IMR-90 (cell line): ENCODE measurements at regions of chr1 and their contacts with region 1.

Region 1: DNA sequence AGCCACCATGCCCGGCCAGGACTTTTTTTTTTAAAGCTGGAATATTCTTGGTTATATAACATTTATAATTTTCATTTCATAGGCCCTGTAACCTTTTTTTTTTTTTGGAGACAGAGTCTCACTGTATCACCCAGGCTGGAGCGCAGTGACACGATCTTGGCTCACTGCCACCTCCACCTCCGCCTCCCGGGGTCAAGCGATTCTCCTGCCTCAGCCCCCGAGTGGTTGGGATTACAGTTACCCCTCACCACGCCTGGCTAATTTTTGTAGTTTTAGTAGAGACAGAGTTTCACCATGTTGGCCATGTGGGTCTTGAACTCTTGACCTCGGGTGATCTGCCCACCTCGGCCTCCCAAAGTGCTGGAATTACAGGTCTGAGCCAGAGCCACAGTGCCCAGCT is 12.6 kb downstream of the ZYG11B start:
- DNase-seq: no peak
- ATAC-seq: no peak
- H3K4me3 ChIP-seq: no peak overlapping the region
- H3K27ac ChIP-seq: no peak overlapping the region
- H3K4me1 ChIP-seq: no peaks in the 10 kb centered on the region; the same call in 1 of the 2 replicates
- H3K27me3 ChIP-seq: no peaks in the 10 kb centered on the region
- CTCF ChIP-seq: no peak
- POLR2A ChIP-seq: no peak
- RAD21 ChIP-seq: no peak

Region 2: GRCh38 chr1:51157395-51157794 is 1581.5 kb before region 1 on chr1:
- CTCF ChIA-PET with region 1: no interaction called
- POLR2A ChIA-PET with region 1: no interaction called
- dilution Hi-C with region 1: no loop called
- in situ Hi-C with region 1: no loop called
- intact Hi-C with region 1: no loop called
- DNase-seq: no peak
- ATAC-seq: no peak
- H3K4me3 ChIP-seq: no peak overlapping the region
- H3K27ac ChIP-seq: no peak overlapping the region
- H3K4me1 ChIP-seq: no peaks in the 10 kb centered on the region
- H3K27me3 ChIP-seq: no peaks in the 10 kb centered on the region; the same call in 1 of the 2 replicates
- CTCF ChIP-seq: no peak
- POLR2A ChIP-seq: no peak
- RAD21 ChIP-seq: no peak

Region 3: DNA sequence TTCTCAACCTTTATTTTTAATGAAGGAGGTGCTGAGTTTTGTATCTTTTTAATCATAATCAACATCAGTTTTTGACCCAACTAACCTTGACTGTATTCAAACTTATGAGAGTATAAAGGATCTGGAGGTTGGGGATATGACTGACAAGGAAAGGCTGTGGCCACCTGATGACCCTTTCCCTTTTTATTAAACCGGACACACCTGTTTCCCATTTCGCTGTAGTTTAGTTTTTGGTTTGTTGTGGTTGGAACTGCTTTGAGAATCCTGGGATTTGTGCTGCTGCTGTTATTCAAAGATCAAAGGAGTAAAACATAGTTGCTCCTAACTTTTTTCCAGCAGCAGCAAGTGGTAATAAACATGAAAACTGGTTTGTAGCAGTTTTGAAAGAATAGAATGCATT is 322.1 kb before region 1 on chr1:
- CTCF ChIA-PET with region 1: no interaction called
- POLR2A ChIA-PET with region 1: no interaction called
- dilution Hi-C with region 1: no loop called
- in situ Hi-C with region 1: no loop called
- intact Hi-C with region 1: no loop called
- DNase-seq: no peak
- ATAC-seq: no peak
- H3K4me3 ChIP-seq: no peak overlapping the region
- H3K27ac ChIP-seq: no peak overlapping the region
- H3K4me1 ChIP-seq: no peaks in the 10 kb centered on the region
- H3K27me3 ChIP-seq: no peaks in the 10 kb centered on the region
- CTCF ChIP-seq: no peak
- POLR2A ChIP-seq: no peak
- RAD21 ChIP-seq: no peak

Region 4: GRCh38 chr1:52511851-52512615 is 226.9 kb before region 1 on chr1:
- CTCF ChIA-PET with region 1: no interaction called
- POLR2A ChIA-PET with region 1: no interaction called
- dilution Hi-C with region 1: no loop called
- in situ Hi-C with region 1: no loop called
- intact Hi-C with region 1: no loop called
- DNase-seq: no peak
- ATAC-seq: no peak
- H3K4me3 ChIP-seq: no peak overlapping the region
- H3K27ac ChIP-seq: no peak overlapping the region
- H3K4me1 ChIP-seq: no peaks in the 10 kb centered on the region
- H3K27me3 ChIP-seq: no peaks in the 10 kb centered on the region
- CTCF ChIP-seq: no peak
- POLR2A ChIP-seq: no peak
- RAD21 ChIP-seq: no peak

Region 5: DNA sequence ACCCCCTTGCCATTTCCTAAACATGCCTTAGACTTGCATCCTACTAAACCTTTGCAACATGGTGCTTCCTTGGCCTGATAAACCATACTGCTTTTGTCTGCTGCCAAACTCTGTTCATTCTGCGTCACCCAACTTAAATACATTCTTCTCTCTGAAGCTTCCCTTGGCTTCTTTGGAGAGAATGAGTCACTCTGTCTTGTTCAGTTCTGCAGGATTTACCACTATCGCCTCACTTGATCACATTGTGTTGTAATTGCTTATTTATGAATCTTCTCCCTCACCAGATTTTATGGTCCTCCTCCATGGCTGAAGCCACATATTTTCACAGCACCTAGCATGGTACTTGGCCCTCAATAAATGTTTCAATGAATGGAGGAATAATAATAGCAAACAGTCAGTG is 164.3 kb before region 1 on chr1:
- CTCF ChIA-PET with region 1: no interaction called
- POLR2A ChIA-PET with region 1: no interaction called
- dilution Hi-C with region 1: no loop called
- in situ Hi-C with region 1: no loop called
- intact Hi-C with region 1: no loop called
- DNase-seq: peak; percentile 98
- ATAC-seq: peak; percentile 96
- H3K4me3 ChIP-seq: no peak overlapping the region
- H3K27ac ChIP-seq: peak overlapping the region; percentile 28; the same call in 1 of the 2 replicates
- H3K4me1 ChIP-seq: peaks cover 8% of the 10 kb centered on the region
- H3K27me3 ChIP-seq: 0 out of 2 replicates have a peak, but pooled peaks cover 2% of the 10 kb centered on the region
- CTCF ChIP-seq: no peak
- POLR2A ChIP-seq: no peak
- RAD21 ChIP-seq: no peak

Region 6: GRCh38 chr1:52697795-52698674 is 40.9 kb before region 1 on chr1 and contains the start of gene COA7:
- CTCF ChIA-PET with region 1: interaction called, 3 read pairs
- POLR2A ChIA-PET with region 1: interaction called, 15 read pairs
- dilution Hi-C with region 1: no loop called
- in situ Hi-C with region 1: no loop called
- intact Hi-C with region 1: no loop called
- DNase-seq: peak; percentile 71
- ATAC-seq: peak; percentile 88
- H3K4me3 ChIP-seq: peak within 1 kb of the TSS; percentile 91
- H3K27ac ChIP-seq: peak within 1 kb of the TSS; percentile 95
- H3K4me1 ChIP-seq: peaks cover 6% of the 10 kb centered on the region; the same call in 1 of the 2 replicates
- H3K27me3 ChIP-seq: no peaks in the 10 kb centered on the region
- CTCF ChIP-seq: no peak
- POLR2A ChIP-seq: no peak; the same call in none of the 2 replicates
- RAD21 ChIP-seq: no peak
- total RNA-seq, gene COA7: 17.5 and 20.3 TPM in 2 replicates